GM10248 (cell line): ENCODE measurements at regions of chr18 and their contacts with region 1.

Region 1: DNA sequence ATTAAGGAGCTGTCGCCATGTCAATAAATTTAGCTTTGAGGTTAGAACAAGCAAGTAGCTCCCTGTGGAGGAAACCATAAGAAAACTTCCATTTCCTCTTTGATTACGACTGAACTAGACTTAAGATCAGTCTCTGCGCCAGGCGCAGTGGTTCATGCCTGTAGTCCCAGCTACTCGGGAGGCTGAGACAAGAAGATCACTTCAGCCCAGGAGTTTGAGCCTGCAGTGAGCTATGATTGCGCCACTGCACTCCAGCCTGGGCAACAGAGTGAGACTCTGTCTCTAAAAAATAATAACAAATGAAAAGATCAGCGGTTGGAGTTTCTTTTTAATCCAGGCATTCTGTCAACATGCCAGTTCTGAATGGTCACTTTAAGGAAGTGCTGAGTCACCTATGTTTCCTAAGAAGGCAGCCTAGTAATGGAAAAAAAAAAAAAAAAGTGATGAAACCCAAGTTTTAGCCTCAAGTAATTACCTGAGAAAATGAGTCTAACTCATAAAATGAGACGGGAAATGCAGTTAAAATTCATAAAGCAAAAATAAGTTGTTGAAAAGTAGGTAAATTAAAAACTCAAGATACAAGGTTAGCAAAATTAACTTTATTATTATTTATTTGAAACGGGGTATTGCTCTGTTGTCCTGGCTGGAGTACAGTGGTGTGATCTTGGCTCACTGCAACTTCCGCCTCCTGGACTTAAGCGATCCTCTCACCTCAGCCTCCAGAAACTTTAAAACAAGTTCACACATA is 10.2 kb downstream of the C18orf32 start:
- DNase-seq: no peak
- CTCF ChIP-seq: no peak

Region 2: DNA sequence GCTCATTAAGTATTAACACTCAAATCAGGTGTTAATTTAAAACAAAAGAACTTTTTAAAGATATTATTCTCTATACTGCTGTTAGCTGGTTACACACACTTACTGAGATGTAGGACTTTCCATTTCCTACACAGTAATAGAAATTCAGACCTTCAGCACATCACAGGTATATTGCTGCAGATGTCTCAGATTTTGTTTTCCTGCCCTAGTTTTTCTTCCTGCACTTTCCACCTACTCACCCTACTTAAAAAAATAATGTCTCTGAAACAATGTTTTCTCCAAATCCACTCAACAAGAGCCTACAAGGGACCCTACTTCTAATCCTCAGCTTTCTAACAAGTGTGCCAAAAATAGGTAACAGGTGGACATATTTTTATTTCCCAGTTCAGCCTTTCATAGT is 60.3 kb before region 1 on chr18:
- CTCF ChIA-PET with region 1: no interaction called
- POLR2A ChIA-PET with region 1: no interaction called
- DNase-seq: no peak
- CTCF ChIP-seq: no peak

Region 3: DNA sequence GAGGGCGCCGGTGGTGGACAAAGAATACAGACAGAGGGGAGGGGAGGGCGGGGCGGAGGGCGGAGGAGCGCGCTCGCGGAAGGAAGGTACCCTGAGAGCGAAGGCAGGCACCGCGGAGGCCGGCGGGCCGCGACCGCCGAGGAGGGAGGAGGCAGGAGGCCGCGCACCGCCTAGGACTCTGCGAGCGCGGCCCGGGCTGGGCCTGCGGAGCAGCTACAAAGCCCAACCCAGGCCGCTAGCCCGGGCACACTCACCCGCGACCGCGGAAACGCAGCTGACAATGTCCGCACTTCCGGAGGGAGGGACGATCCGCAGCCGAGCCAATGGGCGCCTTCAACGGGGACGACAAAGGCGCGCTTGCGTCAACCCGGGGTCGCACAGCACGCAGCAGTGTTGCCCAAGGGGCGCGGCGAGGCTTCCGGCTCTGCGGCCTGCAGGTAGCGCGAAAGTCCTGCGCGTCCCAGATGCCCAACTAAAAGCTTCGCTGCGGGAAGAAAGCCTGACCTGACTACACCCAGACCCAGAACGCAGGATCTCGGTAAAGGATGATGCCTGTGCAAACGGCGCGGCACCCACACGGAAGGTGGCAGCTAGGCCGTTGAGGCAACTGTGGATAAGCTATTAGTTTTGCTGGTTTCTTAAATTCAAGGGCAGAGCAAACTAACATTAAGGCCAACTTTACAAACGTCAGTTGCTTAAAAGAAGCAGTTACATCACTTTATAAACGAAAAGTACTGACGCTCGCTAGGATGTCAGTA is 10.3 kb after region 1 on chr18 and contains the start of gene C18orf32:
- CTCF ChIA-PET with region 1: interaction called, 9 read pairs
- POLR2A ChIA-PET with region 1: interaction called, 16 read pairs
- DNase-seq: peak; percentile 92
- CTCF ChIP-seq: no peak

Region 4: DNA sequence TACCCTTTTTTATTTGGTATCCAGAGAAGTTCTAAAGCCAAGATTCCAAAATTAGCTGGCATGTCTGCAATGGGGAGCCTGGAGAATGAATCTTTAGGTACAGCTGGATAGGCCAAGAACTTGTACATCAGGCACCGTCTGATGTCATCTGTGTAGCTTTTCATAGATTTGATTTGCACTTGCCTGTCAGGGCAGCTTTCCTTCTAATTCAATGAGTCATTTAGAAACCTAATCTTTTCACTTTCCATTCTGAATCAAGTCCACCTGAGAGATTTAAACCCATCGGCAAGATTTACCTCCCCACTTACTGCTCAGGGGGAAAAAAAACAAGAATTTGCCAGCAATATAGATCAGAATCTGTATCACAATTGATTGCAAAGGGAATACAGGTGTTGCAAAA is 397.4 kb after region 1 on chr18:
- CTCF ChIA-PET with region 1: no interaction called
- POLR2A ChIA-PET with region 1: no interaction called
- DNase-seq: peak; percentile 41
- CTCF ChIP-seq: no peak

Region 5: GRCh38 chr18:50726960-50727589 is 1250.2 kb after region 1 on chr18:
- CTCF ChIA-PET with region 1: no interaction called
- POLR2A ChIA-PET with region 1: no interaction called
- DNase-seq: peak; percentile 67
- CTCF ChIP-seq: no peak